ENCODE measurements at regions of chr2 and their contacts with region 1.

Region 1: DNA sequence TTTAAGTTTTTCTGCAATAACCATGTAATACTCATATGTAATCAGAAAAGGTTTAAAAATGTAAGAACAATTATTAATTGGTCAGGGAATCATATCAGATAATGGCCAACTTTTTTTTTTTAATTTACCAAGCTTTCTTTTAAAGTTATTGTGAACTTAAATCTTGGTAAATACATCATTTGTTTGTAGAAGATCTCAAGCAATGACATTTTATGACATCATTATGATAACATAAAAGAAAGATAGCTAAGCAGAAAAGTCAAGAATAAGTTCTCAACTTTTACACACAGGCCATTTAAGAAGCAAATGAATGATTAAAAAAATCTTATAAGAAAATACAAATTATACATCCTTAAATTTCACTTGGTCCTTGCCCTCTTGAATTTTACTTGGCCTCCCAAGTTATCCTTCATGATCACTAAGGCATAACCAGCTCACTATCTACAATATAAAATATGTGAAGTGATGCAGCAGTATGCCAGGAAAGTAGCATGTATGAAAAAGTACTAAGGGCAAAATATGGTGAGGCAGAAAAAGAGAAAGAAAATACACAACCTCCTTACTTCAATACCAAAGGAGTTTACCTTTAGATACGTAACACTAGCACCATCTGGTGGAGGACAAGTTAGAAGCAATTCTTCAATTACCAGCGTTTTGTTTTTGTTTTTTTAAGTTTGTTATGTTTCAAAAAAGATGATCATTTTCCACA is 116.6 kb downstream of the SRBD1 start:
- DNase-seq: peak; percentile 88
- H3K4me3 ChIP-seq: no peak overlapping the region
- H3K27ac ChIP-seq: peak overlapping the region; percentile 72
- H3K4me1 ChIP-seq: peaks cover 41% of the 10 kb centered on the region
- CTCF ChIP-seq: peak; percentile 97

Region 2: DNA sequence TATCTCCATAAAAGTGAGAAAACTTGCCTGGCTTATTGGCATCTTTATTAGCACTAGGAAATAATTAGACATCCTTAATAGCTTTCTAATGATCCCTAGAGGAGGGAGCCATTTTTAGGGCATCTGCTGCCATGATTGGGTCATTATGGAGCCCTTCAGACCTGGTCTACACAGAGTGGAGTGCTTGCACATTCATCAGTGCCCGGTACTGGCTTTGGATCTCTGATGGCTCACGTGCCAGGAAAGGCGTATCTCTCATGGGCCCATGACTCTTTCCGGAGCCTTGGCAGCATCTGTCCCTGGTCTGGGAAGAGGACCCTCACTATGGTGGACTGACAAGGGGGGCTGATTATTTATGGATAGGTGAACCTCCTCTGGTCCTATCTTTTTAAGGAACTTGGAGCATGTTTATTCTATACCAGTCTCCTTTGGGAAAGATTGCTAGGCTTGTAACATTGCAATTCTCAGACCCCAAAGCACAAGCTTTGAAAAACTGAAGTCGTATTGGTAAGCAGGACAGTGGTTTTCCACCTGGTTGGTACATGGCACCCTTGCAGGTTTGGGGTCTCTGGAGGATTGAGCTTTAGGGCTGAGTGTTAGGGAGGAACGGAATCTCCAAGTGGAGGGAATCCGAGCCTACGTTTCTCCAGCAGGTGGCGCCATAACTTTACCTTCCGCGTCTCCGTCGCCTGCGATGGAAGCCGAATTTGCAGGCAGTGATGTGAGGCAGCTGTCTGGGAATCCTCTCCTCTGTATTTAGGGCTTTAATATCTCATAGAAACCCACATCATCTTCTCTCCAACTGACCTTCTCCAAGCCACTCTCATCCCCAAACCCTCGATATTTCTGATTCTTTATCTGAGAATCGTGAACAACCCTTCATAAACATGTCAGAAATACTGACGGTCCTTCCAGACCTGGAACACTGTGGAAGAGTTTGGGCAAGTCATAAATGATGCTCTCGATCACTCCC is 513.0 kb before region 1 on chr2:
- CTCF ChIA-PET with region 1: interaction called, 19 read pairs
- POLR2A ChIA-PET with region 1: interaction called, 18 read pairs
- intact Hi-C with region 1: loop called (anchors 1 kb)
- DNase-seq: peak; percentile 87
- H3K4me3 ChIP-seq: no peak overlapping the region
- H3K27ac ChIP-seq: peak overlapping the region; percentile 37
- H3K4me1 ChIP-seq: peaks cover 21% of the 10 kb centered on the region
- CTCF ChIP-seq: peak; percentile 96

Region 3: GRCh38 chr2:45024600-45025291 is 469.7 kb before region 1 on chr2:
- CTCF ChIA-PET with region 1: no interaction called
- POLR2A ChIA-PET with region 1: interaction called, 4 read pairs
- intact Hi-C with region 1: loop called (anchors 5 kb)
- DNase-seq: peak; percentile 47
- H3K4me3 ChIP-seq: no peak overlapping the region
- H3K27ac ChIP-seq: no peak overlapping the region
- H3K4me1 ChIP-seq: peaks cover 12% of the 10 kb centered on the region
- CTCF ChIP-seq: peak; percentile 67

Region 4: GRCh38 chr2:45312275-45312674 is 182.1 kb before region 1 on chr2:
- CTCF ChIA-PET with region 1: no interaction called
- POLR2A ChIA-PET with region 1: no interaction called
- intact Hi-C with region 1: loop called (anchors 5 kb)
- DNase-seq: no peak
- H3K4me3 ChIP-seq: no peak overlapping the region
- H3K27ac ChIP-seq: no peak overlapping the region
- H3K4me1 ChIP-seq: no peaks in the 10 kb centered on the region
- CTCF ChIP-seq: no peak

Measured in OCI-LY7 (cell line).